ENCODE measurements at regions of chr5 and their contacts with region 1.

Region 1: GRCh38 chr5:77192444-77193050 is 17.9 kb upstream of the PDE8B start:
- DNase-seq: no peak
- H3K4me3 ChIP-seq: no peak overlapping the region
- CTCF ChIP-seq: no peak

Region 2: GRCh38 chr5:77095189-77095588 is 97.4 kb before region 1 on chr5:
- in situ Hi-C with region 1: loop called (anchors 5 kb)
- DNase-seq: no peak
- H3K4me3 ChIP-seq: no peak overlapping the region
- CTCF ChIP-seq: no peak